Uterus (tissue), 4 donors: ENCODE measurements at regions of chr15 and their contacts with region 1.

Region 1: DNA sequence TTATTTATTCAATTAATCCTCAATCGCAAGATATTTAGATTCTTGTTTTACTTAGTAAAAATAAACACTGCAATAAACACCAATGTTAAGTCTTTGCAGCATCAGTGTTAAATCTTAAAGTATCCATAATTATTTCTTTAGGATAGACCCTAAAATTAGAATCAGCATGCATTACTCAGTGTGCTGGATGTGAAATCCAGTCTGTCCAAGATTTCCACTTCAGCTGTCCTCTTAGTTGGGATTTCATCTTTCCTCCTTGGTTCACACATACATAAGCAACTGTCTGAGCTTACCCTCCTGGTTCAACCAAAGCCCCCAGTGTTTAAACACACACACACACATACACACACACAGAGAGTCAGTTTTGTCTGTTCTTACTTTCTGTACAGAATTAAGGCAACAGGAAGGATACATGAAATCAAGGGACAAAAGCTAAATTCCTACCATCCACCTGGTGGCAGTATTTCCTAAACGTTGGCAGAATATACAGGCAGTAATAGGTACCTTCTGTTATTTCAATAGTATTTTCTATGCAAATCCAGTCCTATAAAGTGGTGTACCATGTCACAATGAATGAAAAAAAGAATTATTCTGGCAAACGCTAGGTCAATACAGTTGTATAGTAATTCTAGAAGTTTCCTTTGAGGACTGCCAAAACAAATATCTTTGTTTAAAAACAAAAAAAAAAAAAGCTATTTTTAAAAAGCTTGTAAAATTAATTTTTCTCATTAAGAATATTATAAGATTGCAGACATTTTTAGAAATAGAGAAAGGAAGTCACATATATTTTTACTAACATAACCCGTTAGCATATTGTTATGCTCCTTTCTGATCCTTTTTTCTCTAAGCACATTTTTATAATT is 27.3 kb upstream of the DMXL2 start:
- DNase-seq: peak in 1 of 2 donors; percentile 61
- H3K4me3 ChIP-seq: no peak overlapping the region
- H3K27ac ChIP-seq: no peak overlapping the region
- H3K4me1 ChIP-seq: no peaks in the 10 kb centered on the region
- H3K27me3 ChIP-seq: no peaks in the 10 kb centered on the region
- CTCF ChIP-seq: peak; percentile 75 to 90 (median 82)
- POLR2A ChIP-seq: no peak

Region 2: GRCh38 chr15:51776952-51777574 is 127.2 kb after region 1 on chr15:
- intact Hi-C with region 1: loop called (anchors 5 kb)
- DNase-seq: peak; percentile 54 to 73
- H3K4me3 ChIP-seq: no peak overlapping the region
- H3K27ac ChIP-seq: no peak overlapping the region
- H3K4me1 ChIP-seq: no peaks in the 10 kb centered on the region
- H3K27me3 ChIP-seq: no peaks in the 10 kb centered on the region
- CTCF ChIP-seq: peak; percentile 73 to 80 (median 76)
- POLR2A ChIP-seq: no peak